ENCODE measurements at regions of chr16 and their contacts with region 1.

Region 1: DNA sequence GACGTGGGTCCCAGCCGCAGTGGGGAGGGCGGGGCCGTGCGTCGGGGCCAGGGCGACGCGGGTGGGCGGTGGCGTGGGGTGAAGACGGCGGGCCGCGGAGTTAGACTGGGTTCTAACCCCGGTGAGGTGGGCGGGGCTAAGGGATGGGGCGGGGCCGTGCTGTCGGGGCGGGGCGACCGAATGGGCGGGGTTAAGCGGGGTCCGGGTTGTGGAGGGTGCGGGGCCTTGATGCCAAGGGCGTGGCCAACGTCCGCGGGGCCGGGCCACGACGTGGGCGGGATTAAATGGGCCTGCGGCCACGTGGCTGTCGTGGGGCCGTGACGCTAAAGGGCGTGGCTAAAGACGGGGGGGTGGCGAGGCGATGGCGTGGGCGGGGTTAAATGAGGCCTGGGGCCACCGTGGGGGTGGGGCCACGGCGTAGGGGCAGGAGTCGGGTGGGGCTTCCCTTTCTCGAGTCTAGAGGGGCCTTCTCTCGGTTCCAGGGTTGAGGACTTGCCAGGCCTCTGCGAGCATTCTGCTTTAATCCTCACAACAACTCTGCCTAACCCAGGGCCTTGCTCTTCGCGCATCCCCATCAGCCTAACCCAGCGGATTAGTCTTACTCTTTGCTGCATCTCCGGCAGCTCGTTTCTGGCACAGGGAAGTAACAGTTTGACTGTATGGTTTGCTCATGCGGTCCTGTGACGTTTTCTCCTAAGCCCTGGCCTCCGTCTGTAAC is 739 bp downstream of the TCF25 start:
- DNase-seq: peak; percentile 94
- H3K4me3 Mint-ChIP-seq: peak overlapping the region; percentile 85
- H3K27ac Mint-ChIP-seq: peak overlapping the region; percentile 98
- H3K4me1 Mint-ChIP-seq: peaks cover 17% of the 10 kb centered on the region
- H3K27me3 Mint-ChIP-seq: no peaks in the 10 kb centered on the region

Region 2: DNA sequence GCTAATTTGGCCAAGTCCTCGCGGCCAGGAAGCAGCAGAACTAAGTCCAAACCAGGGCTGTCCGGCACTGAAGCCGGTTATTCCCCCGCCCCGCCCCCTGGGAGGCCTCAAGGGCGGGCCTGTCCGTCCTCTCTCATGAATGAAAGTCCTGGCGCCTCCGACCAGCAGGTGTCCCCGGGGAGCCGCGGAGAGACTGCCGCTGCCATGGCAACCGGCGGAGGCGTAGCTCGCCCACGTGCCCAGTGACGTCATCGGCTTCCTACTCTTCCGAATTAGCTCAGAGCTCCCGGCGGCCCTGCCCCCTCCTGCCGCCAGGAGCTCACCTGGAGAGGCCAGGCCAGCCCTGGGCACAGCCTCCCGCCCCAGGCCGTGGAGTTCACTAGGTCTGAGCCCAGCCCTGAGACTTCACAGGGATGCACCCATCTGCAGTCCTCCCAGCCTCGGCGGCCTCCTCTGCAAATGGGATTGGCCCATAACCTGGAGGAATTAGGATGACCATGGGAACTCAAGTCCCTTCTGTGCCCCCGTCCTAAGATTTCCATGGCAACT is 174.0 kb before region 1 on chr16:
- CTCF ChIA-PET with region 1: interaction called, 13 read pairs
- POLR2A ChIA-PET with region 1: interaction called, 11 read pairs
- DNase-seq: peak; percentile 96
- H3K4me3 Mint-ChIP-seq: peak overlapping the region; percentile 64
- H3K27ac Mint-ChIP-seq: peak overlapping the region; percentile 58
- H3K4me1 Mint-ChIP-seq: peaks cover 37% of the 10 kb centered on the region
- H3K27me3 Mint-ChIP-seq: no peaks in the 10 kb centered on the region

Region 3: GRCh38 chr16:89815639-89816348 is 58.3 kb before region 1 on chr16:
- CTCF ChIA-PET with region 1: interaction called, 3 read pairs
- POLR2A ChIA-PET with region 1: interaction called, 18 read pairs
- DNase-seq: no peak
- H3K4me3 Mint-ChIP-seq: peak overlapping the region; percentile 91
- H3K27ac Mint-ChIP-seq: peak overlapping the region; percentile 69
- H3K4me1 Mint-ChIP-seq: peaks cover 45% of the 10 kb centered on the region
- H3K27me3 Mint-ChIP-seq: no peaks in the 10 kb centered on the region

Region 4: DNA sequence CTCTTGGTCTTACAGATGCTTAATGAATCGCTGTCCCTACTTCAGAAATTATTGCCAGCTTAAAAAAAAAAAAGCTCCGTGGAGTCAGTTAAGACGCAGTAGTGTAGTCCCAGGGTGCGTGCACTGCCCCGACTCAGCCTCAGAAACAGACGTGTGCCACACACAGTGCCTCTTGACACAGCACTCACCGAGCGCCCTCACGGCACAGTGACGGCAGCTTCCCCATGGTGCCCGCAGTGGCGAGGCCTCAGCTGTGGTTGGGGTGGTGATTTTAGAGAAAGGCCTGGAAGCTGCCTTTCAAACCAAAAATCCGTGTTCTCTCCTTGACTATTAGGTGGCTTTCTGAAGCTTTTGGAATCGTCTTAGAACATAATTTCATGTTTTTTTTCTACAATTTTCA is 13.1 kb after region 1 on chr16:
- CTCF ChIA-PET with region 1: interaction called, 5 read pairs
- POLR2A ChIA-PET with region 1: interaction called, 14 read pairs
- DNase-seq: no peak
- H3K4me3 Mint-ChIP-seq: no peak overlapping the region
- H3K27ac Mint-ChIP-seq: no peak overlapping the region
- H3K4me1 Mint-ChIP-seq: peaks cover 12% of the 10 kb centered on the region
- H3K27me3 Mint-ChIP-seq: no peaks in the 10 kb centered on the region

Region 5: DNA sequence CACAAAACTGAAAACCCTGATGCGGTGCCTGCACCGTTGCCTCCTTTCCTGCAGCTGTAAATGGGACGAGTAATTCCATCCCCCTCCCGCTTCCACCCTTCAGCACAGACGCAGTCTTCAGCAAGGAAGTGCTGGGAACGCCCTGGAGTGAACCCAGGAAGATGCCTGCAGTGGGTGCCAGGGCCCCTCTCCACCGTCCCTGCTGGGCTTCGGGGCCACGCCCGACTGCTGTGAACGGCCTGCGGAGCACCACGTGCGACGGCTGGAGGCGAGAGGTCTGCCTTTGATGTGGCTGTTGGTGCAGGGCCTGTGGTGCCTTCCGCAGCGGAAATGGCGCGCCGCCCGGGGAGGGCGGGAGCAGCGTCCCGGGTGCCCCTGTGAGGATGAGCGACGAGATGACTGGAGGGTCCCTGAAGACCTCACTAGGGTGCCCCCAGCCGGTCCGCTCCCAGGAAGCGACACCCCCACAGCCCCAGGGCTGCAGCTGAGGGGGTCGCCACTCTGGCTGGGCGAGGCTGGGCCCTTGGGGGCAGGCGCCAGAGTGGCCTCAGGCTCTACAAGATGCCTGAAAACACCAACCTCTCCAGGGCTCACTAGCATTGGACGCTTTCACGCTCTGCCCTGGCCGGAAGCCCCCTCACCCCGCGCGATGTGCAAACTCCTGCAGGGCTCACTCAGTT is 43.8 kb after region 1 on chr16:
- CTCF ChIA-PET with region 1: interaction called, 3 read pairs
- POLR2A ChIA-PET with region 1: interaction called, 21 read pairs
- DNase-seq: peak; percentile 92
- H3K4me3 Mint-ChIP-seq: peak overlapping the region; percentile 66
- H3K27ac Mint-ChIP-seq: peak overlapping the region; percentile 71
- H3K4me1 Mint-ChIP-seq: peaks cover 52% of the 10 kb centered on the region
- H3K27me3 Mint-ChIP-seq: peaks cover 29% of the 10 kb centered on the region

Region 6: DNA sequence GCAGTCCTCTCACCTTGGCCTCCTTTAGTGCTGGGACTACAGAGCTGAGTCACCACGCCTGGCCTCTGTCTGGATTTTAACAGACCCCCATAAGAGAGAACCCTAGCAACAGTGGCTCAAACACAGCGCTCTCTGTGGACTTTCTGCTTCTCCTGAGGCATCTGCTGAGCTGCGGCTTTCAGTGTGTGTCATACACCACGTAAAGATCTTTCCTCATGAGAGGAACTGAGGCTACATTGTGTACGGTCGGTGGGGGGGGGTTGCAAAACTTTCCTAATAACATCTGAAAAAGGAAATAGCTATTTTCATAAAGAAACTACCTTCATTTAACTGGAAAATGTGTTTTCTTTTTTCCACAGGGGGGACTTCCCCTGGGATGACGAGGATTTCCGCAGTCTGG is 107.3 kb after region 1 on chr16:
- CTCF ChIA-PET with region 1: no interaction called
- POLR2A ChIA-PET with region 1: no interaction called
- DNase-seq: no peak
- H3K4me3 Mint-ChIP-seq: no peak overlapping the region
- H3K27ac Mint-ChIP-seq: peak overlapping the region; percentile 29
- H3K4me1 Mint-ChIP-seq: peaks cover 19% of the 10 kb centered on the region
- H3K27me3 Mint-ChIP-seq: no peaks in the 10 kb centered on the region

Measured in activated CD4-positive, alpha-beta memory T cell treated with anti-CD3 and anti-CD28 coated beads, Interleukin-2, amount 10 ng/mL, durations not matched to agents 7 days and 5 days (primary cell).